PC-3 (cell line): ENCODE measurements at regions of chr1 and their contacts with region 1.

Region 1: GRCh38 chr1:77832901-77833300 is 53.5 kb downstream of the MIGA1 start:
- DNase-seq: peak; percentile 56
- ATAC-seq: peak; percentile 57
- H3K4me3 ChIP-seq: no peak overlapping the region
- H3K27ac ChIP-seq: peak overlapping the region; percentile 53
- H3K4me1 ChIP-seq: peaks cover 31% of the 10 kb centered on the region
- H3K27me3 ChIP-seq: no peaks in the 10 kb centered on the region
- CTCF ChIP-seq: no peak

Region 2: DNA sequence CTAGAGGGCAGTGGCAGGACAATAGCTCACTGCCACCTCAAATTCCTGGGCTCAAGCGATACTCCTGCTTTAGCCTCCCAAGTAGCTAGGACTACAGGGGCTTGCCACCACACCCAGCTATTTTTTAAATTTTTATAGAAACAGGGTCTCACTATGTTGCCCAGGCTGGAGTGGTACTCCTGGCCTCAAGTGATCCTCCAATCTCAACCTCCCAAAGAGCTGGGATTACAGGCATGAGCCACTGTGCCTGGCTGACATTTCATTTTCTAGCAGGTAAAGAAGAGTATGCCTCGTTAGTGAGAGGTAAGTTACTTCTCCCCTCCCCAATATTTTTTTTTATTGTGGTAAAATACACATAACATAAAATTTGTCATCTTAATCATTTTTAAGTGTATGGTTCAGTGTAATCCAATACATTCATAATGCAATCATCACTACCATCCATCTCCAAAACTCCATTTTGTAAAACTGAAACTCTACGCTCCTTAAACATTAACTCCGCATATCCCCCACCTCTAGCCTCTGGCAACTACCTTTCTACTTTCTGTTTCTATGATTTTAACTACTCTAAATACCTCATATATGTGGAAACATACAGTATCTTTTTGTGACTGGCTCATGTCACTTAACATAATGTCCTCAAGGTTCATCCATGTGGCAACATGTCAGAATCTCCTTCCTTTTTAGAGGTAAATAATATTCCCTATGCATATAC is 172.9 kb before region 1 on chr1:
- CTCF ChIA-PET with region 1: no interaction called
- POLR2A ChIA-PET with region 1: no interaction called
- intact Hi-C with region 1: no loop called
- DNase-seq: no peak
- ATAC-seq: no peak
- H3K4me3 ChIP-seq: no peak overlapping the region
- H3K27ac ChIP-seq: no peak overlapping the region
- H3K4me1 ChIP-seq: no peaks in the 10 kb centered on the region
- H3K27me3 ChIP-seq: no peaks in the 10 kb centered on the region
- CTCF ChIP-seq: no peak

Region 3: GRCh38 chr1:77872645-77873044 is 39.7 kb after region 1 on chr1:
- CTCF ChIA-PET with region 1: no interaction called
- POLR2A ChIA-PET with region 1: no interaction called
- intact Hi-C with region 1: loop called (anchors 1 kb)
- DNase-seq: no peak
- ATAC-seq: peak; percentile 9; the same call in 1 of the 2 replicates
- H3K4me3 ChIP-seq: no peak overlapping the region
- H3K27ac ChIP-seq: no peak overlapping the region
- H3K4me1 ChIP-seq: peaks cover 19% of the 10 kb centered on the region
- H3K27me3 ChIP-seq: no peaks in the 10 kb centered on the region
- CTCF ChIP-seq: no peak

Region 4: GRCh38 chr1:77888081-77888780 is 55.3 kb after region 1 on chr1 and contains the start of gene NEXN:
- CTCF ChIA-PET with region 1: no interaction called
- POLR2A ChIA-PET with region 1: no interaction called
- intact Hi-C with region 1: loop called (anchors 5 kb)
- DNase-seq: peak; percentile 48
- ATAC-seq: peak; percentile 52
- H3K4me3 ChIP-seq: peak within 1 kb of the TSS; percentile 93
- H3K27ac ChIP-seq: peak within 1 kb of the TSS; percentile 72
- H3K4me1 ChIP-seq: peaks cover 22% of the 10 kb centered on the region
- H3K27me3 ChIP-seq: no peaks in the 10 kb centered on the region
- CTCF ChIP-seq: no peak
- total RNA-seq, gene NEXN: 3.1 and 3.5 TPM in 2 replicates

Region 5: GRCh38 chr1:78045926-78046778 is 213.3 kb after region 1 on chr1 and contains the start of gene GIPC2:
- CTCF ChIA-PET with region 1: no interaction called
- POLR2A ChIA-PET with region 1: no interaction called
- intact Hi-C with region 1: no loop called
- DNase-seq: no peak
- ATAC-seq: no peak
- H3K4me3 ChIP-seq: no peak within 1 kb of the TSS
- H3K27ac ChIP-seq: no peak within 1 kb of the TSS
- H3K4me1 ChIP-seq: no peaks in the 10 kb centered on the region
- H3K27me3 ChIP-seq: no peaks in the 10 kb centered on the region
- CTCF ChIP-seq: no peak
- total RNA-seq, gene GIPC2: not detected in 2 replicates